Naive thymus-derived CD4-positive, alpha-beta T cell (primary cell): ENCODE measurements at regions of chr4 and their contacts with region 1.

Region 1: GRCh38 chr4:165112368-165113139 is at the start of gene TMEM192:
- DNase-seq: peak; percentile 84 to 97 (median 91)
- ATAC-seq: peak; percentile 99
- H3K4me3 ChIP-seq: peak within 1 kb of the TSS; percentile 88
- H3K4me3 Mint-ChIP-seq: peak within 1 kb of the TSS; percentile 90 to 99 (median 94)
- H3K27ac ChIP-seq: peak within 1 kb of the TSS; percentile 75
- H3K27ac Mint-ChIP-seq: peak within 1 kb of the TSS; percentile 75 to 96 (median 94)
- H3K4me1 ChIP-seq: peaks cover 0 to 7% of the 10 kb centered on the region in 2 donors
- H3K4me1 Mint-ChIP-seq: peaks cover 13 to 37% (median 18%) of the 10 kb centered on the region in 7 donors
- H3K27me3 ChIP-seq: no peaks in the 10 kb centered on the region
- H3K27me3 Mint-ChIP-seq: peaks cover 0 to 23% (median 0%) of the 10 kb centered on the region in 5 donors
- total RNA-seq, gene TMEM192: 5.3 to 13.9 (median 9.6) TPM

Region 2: DNA sequence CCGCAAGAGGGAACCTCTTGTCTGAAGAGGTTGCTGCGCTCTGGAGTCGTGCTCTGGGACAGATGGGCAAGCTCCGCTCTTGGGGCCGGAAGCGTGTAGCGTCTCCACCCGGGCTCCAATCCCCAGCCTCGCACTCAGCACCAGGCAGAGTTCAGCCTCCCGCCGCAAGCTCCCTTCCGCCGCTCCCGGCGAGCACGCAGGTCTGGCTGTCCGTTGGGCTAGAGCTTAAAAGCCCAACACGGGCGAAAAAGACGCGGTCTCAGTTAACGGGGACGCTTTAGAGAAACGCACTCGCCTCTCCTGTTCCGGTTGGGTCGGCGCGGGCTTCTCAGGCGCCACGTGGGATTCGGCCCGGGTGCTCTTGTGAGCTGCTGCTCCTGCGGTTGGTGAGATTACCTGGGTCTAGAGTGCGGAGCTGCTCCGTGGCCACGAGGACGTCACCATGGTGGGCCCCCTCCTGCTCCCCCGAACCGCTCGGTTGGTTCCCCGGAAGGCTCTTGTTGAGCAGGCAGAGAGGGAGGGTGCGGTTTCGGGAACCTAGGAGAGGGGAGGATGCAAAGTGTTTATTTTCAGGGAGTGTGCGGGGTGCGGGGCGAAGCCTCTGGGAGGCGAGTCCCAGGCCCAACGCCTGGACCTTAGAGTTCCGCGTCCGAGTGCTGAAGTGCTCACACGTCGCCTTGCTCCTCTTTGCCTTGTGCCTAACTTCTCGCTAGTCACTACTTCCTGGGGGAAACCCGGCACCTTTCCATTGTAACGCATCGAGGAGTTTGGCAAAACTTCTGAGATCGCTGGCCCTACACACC is 1618.0 kb before region 1 on chr4 and contains the start of gene TMA16:
- CTCF ChIA-PET with region 1: no interaction called
- POLR2A ChIA-PET with region 1: no interaction called
- intact Hi-C with region 1: loop called (anchors 1 to 5 kb)
- DNase-seq: peak; percentile 56 to 87 (median 76)
- ATAC-seq: peak; percentile 89
- H3K4me3 ChIP-seq: peak within 1 kb of the TSS; percentile 94
- H3K4me3 Mint-ChIP-seq: peak within 1 kb of the TSS; percentile 92 to 100 (median 98)
- H3K27ac ChIP-seq: peak within 1 kb of the TSS; percentile 83
- H3K27ac Mint-ChIP-seq: peak within 1 kb of the TSS; percentile 78 to 99 (median 96)
- H3K4me1 ChIP-seq: peaks cover 7% of the 10 kb centered on the region in 2 donors
- H3K4me1 Mint-ChIP-seq: peaks cover 20 to 44% (median 36%) of the 10 kb centered on the region in 7 donors
- H3K27me3 ChIP-seq: no peaks in the 10 kb centered on the region
- H3K27me3 Mint-ChIP-seq: peaks cover 0 to 12% (median 5%) of the 10 kb centered on the region in 5 donors
- total RNA-seq, gene TMA16: 10.5 to 38.7 (median 20.7) TPM

Region 3: DNA sequence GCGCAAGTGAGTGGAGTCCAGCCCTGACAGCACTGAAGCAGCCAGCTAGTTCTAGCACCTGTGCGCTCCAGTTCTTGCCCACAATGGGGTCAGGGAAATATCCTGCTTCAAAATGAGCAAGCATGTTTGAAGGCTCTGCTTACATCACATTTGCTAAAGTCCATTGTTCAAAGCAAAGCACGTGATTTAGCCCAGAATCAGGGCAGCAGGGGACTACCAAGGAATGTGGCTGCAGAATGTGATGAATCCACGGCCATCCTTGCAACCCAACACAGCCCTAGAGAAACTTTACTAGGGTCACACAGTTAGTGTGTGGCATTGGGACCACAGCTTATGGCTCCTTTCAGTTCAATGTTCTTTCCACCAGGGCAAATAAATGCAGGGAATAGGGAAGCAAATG is 405.9 kb before region 1 on chr4:
- CTCF ChIA-PET with region 1: no interaction called
- POLR2A ChIA-PET with region 1: no interaction called
- intact Hi-C with region 1: no loop called
- DNase-seq: no peak
- ATAC-seq: no peak
- H3K4me3 ChIP-seq: no peak overlapping the region
- H3K4me3 Mint-ChIP-seq: no peak overlapping the region
- H3K27ac ChIP-seq: no peak overlapping the region
- H3K27ac Mint-ChIP-seq: no peak overlapping the region
- H3K4me1 ChIP-seq: no peaks in the 10 kb centered on the region
- H3K4me1 Mint-ChIP-seq: peaks cover 0 to under 1% (median 0%) of the 10 kb centered on the region in 7 donors
- H3K27me3 ChIP-seq: no peaks in the 10 kb centered on the region
- H3K27me3 Mint-ChIP-seq: peaks cover 0 to 11% (median 6%) of the 10 kb centered on the region in 5 donors

Region 4: DNA sequence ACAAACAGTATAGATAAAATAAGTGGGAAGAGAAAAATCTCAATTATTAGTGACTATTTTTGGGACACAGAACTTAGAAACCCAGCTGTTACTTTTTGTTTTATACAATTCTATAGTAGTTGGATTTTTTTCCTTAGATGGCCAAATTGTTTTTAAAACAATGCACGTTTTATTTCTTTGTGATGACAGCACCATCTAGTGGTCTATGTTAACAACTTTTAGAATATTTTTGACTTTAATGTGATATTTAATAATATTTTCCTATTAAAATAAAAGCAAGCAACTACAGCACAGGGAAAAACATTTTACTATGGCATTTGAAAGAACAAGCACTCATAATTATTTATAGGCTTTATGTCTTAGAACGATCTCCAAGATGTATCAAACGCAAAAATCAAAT is 364.2 kb before region 1 on chr4:
- CTCF ChIA-PET with region 1: no interaction called
- POLR2A ChIA-PET with region 1: no interaction called
- intact Hi-C with region 1: no loop called
- DNase-seq: peak in 1 of 9 donors; percentile 8
- ATAC-seq: no peak
- H3K4me3 ChIP-seq: no peak overlapping the region
- H3K4me3 Mint-ChIP-seq: no peak overlapping the region
- H3K27ac ChIP-seq: no peak overlapping the region
- H3K27ac Mint-ChIP-seq: no peak overlapping the region
- H3K4me1 ChIP-seq: no peaks in the 10 kb centered on the region
- H3K4me1 Mint-ChIP-seq: no peaks in the 10 kb centered on the region
- H3K27me3 ChIP-seq: no peaks in the 10 kb centered on the region
- H3K27me3 Mint-ChIP-seq: peaks cover 0 to 23% (median 9%) of the 10 kb centered on the region in 5 donors

Region 5: GRCh38 chr4:165131247-165131832 is 18.8 kb after region 1 on chr4:
- CTCF ChIA-PET with region 1: interaction called, 8 read pairs
- POLR2A ChIA-PET with region 1: no interaction called
- intact Hi-C with region 1: loop called in 1 of 2 experiments (anchors 1 kb)
- DNase-seq: peak; percentile 47 to 85 (median 68)
- ATAC-seq: peak; percentile 89
- H3K4me3 ChIP-seq: no peak overlapping the region
- H3K4me3 Mint-ChIP-seq: peak overlapping the region in 1 of 10 donors; percentile 14
- H3K27ac ChIP-seq: no peak overlapping the region
- H3K27ac Mint-ChIP-seq: peak overlapping the region in 1 of 9 donors; percentile 13
- H3K4me1 ChIP-seq: no peaks in the 10 kb centered on the region
- H3K4me1 Mint-ChIP-seq: peaks cover 4 to 12% (median 10%) of the 10 kb centered on the region in 7 donors
- H3K27me3 ChIP-seq: no peaks in the 10 kb centered on the region
- H3K27me3 Mint-ChIP-seq: peaks cover 0 to 17% (median 5%) of the 10 kb centered on the region in 5 donors

Region 6: GRCh38 chr4:165327211-165328100 is 214.9 kb after region 1 on chr4 and contains the start of gene MSMO1:
- CTCF ChIA-PET with region 1: no interaction called
- POLR2A ChIA-PET with region 1: interaction called, 3 read pairs
- intact Hi-C with region 1: loop called (anchors 1 kb)
- DNase-seq: peak; percentile 94 to 99 (median 97)
- ATAC-seq: peak; percentile 98
- H3K4me3 ChIP-seq: peak within 1 kb of the TSS; percentile 82
- H3K4me3 Mint-ChIP-seq: no peak within 1 kb of the TSS
- H3K27ac ChIP-seq: peak within 1 kb of the TSS; percentile 76
- H3K27ac Mint-ChIP-seq: no peak within 1 kb of the TSS
- H3K4me1 ChIP-seq: peaks cover 18 to 31% of the 10 kb centered on the region in 2 donors
- H3K4me1 Mint-ChIP-seq: peaks cover 23 to 43% (median 31%) of the 10 kb centered on the region in 7 donors
- H3K27me3 ChIP-seq: no peaks in the 10 kb centered on the region
- H3K27me3 Mint-ChIP-seq: no peaks in the 10 kb centered on the region
- total RNA-seq, gene MSMO1: 9.6 to 37.9 (median 24.6) TPM

Region 7: GRCh38 chr4:165464813-165465381 is 352.3 kb after region 1 on chr4:
- CTCF ChIA-PET with region 1: interaction called, 9 read pairs
- POLR2A ChIA-PET with region 1: no interaction called
- intact Hi-C with region 1: loop called (anchors 1 kb)
- DNase-seq: peak in 7 of 9 donors; percentile 7 to 59 (median 39)
- ATAC-seq: peak; percentile 76
- H3K4me3 ChIP-seq: no peak overlapping the region
- H3K4me3 Mint-ChIP-seq: no peak overlapping the region
- H3K27ac ChIP-seq: no peak overlapping the region
- H3K27ac Mint-ChIP-seq: no peak overlapping the region
- H3K4me1 ChIP-seq: no peaks in the 10 kb centered on the region
- H3K4me1 Mint-ChIP-seq: no peaks in the 10 kb centered on the region
- H3K27me3 ChIP-seq: no peaks in the 10 kb centered on the region
- H3K27me3 Mint-ChIP-seq: peaks cover 0 to 6% (median 5%) of the 10 kb centered on the region in 5 donors